ENCODE measurements at regions of chr10 and their contacts with region 1.

Region 1: DNA sequence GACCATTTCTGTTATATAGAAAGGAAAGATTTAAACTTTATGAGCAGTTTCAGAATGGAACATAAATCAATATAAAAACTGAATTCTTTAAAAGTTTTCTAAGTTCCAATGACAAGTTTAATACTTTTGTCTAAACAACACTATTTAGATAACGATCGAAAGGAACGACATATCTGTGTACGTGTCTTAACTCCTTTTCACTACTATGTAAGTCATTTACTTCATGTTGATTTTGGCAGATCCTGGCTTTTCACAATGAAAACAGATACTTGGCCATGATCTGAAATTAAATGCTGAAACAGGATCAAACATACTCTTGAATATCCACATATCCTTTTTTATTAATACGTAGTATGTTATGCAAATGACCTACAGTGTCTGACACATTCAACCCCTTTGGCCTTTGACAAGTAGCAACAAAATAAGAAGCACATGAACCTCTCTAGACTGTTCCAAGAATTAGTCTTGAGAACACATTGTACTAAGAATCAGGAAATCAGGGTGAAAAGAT is 41.9 kb downstream of the RNLS start:
- DNase-seq: no peak
- CTCF ChIP-seq: no peak

Region 2: DNA sequence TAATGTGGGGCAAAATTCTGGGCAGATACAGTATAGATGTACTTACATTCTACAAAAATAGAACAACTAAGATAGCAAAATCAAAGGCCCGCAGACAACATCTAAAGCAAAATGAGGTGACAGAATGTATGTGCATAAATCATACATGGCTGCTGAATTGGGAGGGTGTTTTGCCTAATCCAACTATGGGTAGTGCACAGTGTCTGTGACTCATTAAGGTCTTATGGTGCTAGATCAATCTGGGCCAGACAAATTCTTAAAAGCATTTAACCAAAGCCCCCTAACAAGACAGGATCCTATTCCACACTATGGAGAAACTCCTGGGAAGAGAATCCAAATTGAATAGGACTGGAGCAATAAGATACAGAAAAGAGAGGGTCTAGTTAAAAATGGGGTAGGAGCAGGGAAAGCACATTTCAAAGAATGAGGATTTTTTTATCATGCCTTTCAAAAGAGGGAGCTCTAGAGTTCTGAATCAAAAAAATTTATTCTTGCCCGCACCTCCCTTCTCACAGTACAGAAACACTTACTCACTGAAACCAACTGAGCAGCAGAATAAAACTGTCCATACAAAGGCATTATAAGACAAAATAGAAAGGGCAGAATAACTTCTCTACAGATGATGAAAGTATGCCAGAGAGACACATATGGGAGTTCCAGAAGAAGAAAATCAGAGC is 139.4 kb before region 1 on chr10:
- in situ Hi-C with region 1: loop called (anchors 10 kb)
- DNase-seq: no peak
- CTCF ChIP-seq: no peak

Region 3: DNA sequence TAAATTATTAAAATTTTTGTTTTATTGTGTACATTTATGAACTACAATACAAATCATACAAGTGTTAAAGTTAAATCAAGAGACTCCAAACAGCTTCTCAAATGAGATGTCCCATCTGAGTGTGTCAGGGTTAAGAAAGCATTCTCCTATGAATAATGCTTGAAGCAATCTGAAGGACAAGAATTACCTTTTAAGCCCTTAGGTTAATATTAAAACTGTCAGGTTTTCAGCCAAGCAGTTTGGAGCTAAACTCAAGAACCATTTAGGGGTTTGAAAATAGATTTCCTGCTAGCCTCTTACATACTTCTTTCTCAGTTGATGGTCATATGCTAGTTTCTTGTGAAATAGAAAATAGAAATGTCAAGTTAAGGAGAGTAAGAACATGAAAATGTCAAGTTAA is 83.7 kb after region 1 on chr10:
- in situ Hi-C with region 1: no loop called
- DNase-seq: no peak
- CTCF ChIP-seq: no peak

Region 4: DNA sequence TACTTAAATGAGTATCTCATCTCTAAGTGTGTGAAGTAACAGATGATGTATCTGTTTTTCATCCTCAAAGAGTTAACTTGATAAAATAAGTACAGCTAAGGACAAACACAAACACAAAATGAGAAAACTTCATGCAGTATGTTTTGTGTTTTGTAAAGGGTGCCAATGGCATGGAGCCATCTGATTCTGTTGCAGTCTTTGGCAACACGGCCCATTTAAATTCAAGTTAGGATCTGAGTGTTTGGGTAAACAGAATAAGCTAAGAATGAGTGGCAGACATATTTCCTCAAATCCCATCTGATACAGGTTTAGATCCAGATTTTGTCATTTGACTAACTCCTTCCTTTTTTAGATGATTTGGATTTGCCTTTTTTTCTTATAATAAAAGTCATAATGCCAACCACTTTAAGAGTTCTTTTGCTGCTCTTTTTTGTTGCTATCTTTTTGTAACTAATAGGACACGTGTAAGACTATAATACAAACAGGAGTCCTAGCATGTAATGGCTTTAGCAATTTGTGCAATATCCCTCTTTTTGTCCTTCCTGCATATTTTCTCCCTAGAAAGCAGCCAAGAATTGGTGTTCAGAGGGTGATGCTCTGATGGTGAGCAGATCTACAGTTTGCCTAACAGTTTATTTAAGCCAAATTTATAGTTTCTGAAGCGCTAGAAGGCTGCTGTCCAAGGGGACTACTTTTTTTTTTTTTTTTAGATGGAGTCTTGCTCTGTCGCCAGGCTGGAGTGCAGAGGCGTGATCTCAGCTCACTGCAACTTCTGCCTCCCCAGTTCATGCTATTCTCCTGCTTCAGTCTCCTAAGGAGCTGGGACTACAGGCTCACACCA is 430.3 kb after region 1 on chr10:
- in situ Hi-C with region 1: no loop called
- DNase-seq: no peak
- CTCF ChIP-seq: no peak

Measured in GM13977 (cell line).